ENCODE measurements at regions of chr5 and their contacts with region 1.

Region 1: GRCh38 chr5:32232441-32233219 is 58.5 kb upstream of the GOLPH3 start:
- DNase-seq: peak; percentile 82
- CTCF ChIP-seq: peak; percentile 87

Region 2: GRCh38 chr5:31671339-31671741 is 561.3 kb before region 1 on chr5:
- CTCF ChIA-PET with region 1: no interaction called
- POLR2A ChIA-PET with region 1: no interaction called
- DNase-seq: no peak
- CTCF ChIP-seq: no peak

Region 3: DNA sequence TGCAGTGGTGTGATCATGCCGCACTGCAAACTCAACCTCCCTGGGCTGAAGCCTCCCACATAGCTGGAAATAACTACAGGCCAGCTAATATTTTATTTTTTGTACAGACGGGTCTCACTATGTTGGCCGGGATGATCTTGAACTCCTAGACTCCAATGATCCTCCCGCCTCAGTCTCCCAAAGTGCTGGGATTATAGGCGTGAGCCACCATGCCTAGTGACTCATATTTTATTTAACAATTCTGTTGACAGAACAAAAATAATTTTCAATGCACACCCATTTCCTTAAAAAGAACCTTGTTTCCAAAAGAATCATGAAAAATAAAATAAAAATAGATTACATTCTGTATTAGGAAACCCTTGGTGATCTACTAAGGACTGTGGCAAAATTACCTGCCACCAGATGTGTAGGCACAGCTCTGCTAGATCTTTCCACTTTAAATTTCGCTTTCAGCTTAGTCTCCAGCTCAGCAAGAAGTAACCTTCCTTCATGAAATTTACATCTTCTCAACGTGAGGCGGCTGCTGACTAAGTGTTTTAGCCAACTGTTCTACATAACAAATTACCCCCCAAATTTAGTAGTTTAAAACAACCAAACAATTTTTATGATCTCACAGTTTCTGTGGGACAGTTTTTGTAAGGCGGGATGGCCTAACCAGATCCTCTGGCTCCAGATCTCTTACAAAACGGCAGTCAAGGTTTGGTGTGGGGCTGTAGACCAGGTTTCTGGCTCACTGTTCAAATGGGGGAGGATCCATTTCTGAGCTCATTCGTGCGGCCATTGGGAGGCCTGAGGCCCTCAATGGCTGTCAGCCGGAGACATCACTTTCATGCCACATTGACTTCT is 25.9 kb before region 1 on chr5:
- CTCF ChIA-PET with region 1: interaction called, 10 read pairs
- POLR2A ChIA-PET with region 1: no interaction called
- DNase-seq: peak; percentile 51
- CTCF ChIP-seq: no peak

Region 4: GRCh38 chr5:32217886-32218396 is 14.7 kb before region 1 on chr5:
- CTCF ChIA-PET with region 1: interaction called, 20 read pairs
- POLR2A ChIA-PET with region 1: no interaction called
- DNase-seq: no peak
- CTCF ChIP-seq: no peak

Region 5: GRCh38 chr5:32254881-32255539 is 22.4 kb after region 1 on chr5:
- CTCF ChIA-PET with region 1: interaction called, 99 read pairs
- POLR2A ChIA-PET with region 1: no interaction called
- DNase-seq: no peak
- CTCF ChIP-seq: no peak

Region 6: DNA sequence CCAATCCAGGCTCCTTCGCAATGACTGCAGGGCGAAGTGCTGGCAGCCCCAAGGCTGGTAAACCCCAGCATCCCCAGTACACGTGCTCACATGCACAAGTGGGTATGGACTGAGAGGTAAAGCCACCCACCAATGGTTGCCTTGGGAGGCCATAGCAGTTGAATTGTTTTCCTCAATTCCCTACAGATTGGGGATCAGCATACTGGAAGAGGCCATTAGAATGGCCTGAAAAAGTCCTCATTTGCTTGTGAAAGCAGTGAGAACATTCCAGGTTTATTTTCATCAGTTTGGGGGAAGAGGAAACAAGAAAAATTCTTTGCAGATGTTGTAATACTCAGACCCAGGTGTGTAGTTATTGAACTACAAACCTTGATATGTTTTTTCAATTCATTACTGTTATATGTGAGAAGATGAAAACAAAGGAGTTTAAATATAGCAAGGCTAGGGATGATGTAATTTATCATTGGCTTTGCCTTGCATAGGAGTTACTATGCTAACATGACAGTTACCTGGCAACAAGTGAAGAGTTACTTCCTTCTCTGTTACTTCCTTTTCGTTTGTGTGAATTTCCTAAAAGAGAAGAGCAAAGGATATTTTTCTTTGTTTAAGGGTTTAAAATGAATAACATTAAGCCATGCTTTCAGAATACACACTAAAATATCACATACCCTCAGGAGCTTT is 43.7 kb after region 1 on chr5:
- CTCF ChIA-PET with region 1: interaction called, 40 read pairs
- POLR2A ChIA-PET with region 1: no interaction called
- DNase-seq: peak; percentile 53
- CTCF ChIP-seq: no peak

Region 7: GRCh38 chr5:32319392-32319791 is 86.8 kb after region 1 on chr5:
- CTCF ChIA-PET with region 1: interaction called, 204 read pairs
- POLR2A ChIA-PET with region 1: no interaction called
- DNase-seq: no peak
- CTCF ChIP-seq: no peak

Region 8: DNA sequence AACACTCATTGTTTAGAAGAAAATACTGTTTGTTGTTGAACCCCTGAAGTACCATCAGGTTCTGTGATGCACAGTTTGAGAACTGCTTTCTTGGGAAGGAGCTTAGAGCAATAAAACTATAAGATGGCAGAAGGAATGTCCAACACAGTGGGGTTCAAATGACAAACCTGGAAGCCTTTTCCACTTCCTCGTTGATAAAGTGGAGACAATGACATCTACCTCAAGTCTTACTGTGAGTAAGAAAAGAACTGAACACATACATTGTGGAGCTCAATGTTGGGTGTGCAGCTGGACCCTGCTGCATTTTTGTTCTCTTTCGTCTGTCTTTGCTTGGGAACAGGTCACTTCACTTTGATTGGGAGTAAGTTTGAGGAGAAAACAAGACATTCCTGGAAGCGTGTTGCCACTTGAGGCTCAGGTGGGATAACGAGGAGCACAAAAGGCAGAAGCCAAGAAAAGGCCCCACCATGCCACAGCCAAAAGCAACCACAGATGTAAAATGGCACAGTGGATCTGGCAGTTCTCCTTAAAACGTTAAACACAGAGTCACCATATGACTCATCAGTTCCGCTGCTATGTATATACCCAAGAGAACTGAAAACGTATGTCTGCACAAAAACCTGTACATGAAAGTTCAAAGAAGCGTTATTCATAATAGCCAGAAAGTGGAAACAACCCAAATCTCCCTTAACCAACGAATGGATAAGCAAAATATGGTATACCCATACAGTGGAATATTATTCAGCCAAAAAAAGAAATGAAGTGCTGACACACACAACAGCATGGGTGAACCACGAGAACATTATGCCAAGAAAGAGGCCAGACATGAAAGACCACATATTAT is 309.8 kb after region 1 on chr5:
- CTCF ChIA-PET with region 1: no interaction called
- POLR2A ChIA-PET with region 1: no interaction called
- DNase-seq: peak; percentile 53
- CTCF ChIP-seq: no peak

Region 9: GRCh38 chr5:32613050-32613672 is 380.5 kb after region 1 on chr5:
- CTCF ChIA-PET with region 1: interaction called, 48 read pairs
- POLR2A ChIA-PET with region 1: no interaction called
- DNase-seq: peak; percentile 81
- CTCF ChIP-seq: peak; percentile 81